Body of pancreas (tissue), 4 donors: ENCODE measurements at regions of chr2 and their contacts with region 1.

Region 1: GRCh38 chr2:6922201-6922685 is 5.0 kb downstream of the RNF144A start:
- DNase-seq: peak in 3 of 4 donors; percentile 64 to 70 (median 65)
- ATAC-seq: no peak
- H3K4me3 ChIP-seq: no peak overlapping the region
- H3K27ac ChIP-seq: peak overlapping the region in 3 of 4 donors; percentile 71 to 94 (median 79)
- H3K4me1 ChIP-seq: peaks cover 85% of the 10 kb centered on the region
- H3K27me3 ChIP-seq: no peaks in the 10 kb centered on the region
- CTCF ChIP-seq: peak in 5 of 7 experiments; percentile 9 to 54 (median 42)
- POLR2A ChIP-seq: no peak

Region 2: GRCh38 chr2:6986301-6987176 is 64.3 kb after region 1 on chr2:
- intact Hi-C with region 1: loop called (anchors 10 kb)
- DNase-seq: peak; percentile 81 to 93 (median 92)
- ATAC-seq: peak; percentile 94
- H3K4me3 ChIP-seq: no peak overlapping the region
- H3K27ac ChIP-seq: peak overlapping the region; percentile 76 to 85 (median 81)
- H3K4me1 ChIP-seq: peaks cover 70% of the 10 kb centered on the region
- H3K27me3 ChIP-seq: no peaks in the 10 kb centered on the region
- CTCF ChIP-seq: peak in 2 of 7 experiments; percentile 14 to 29
- POLR2A ChIP-seq: no peak